ENCODE measurements at regions of chr13 and their contacts with region 1.

Region 1: DNA sequence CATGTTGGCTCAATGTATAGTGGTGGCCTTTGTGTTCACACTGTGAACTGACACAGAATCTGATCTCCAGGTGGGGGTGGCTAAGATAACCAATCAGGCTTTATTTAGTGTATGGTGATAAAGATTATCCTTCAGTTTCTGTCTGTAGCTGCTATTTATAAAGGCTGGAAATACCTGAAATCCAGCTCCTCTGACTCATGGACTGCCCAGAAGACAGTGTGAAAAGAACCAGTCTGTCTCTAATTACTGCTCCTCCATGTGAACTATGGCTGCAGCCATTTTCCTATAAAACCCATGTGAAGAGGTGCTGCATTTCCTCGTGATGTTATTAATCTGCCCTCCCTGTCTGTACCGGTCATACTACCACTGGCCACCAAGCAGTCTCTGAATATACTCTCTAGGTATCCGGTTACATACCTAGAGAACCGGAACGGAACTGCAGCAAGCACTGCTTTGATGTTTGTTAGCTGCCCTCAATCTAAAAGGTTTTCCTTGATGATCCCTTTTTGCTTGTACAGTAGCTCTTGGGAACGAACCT is 238.0 kb downstream of the LHFPL6 start:
- DNase-seq: no peak
- H3K4me3 ChIP-seq: no peak overlapping the region
- H3K27ac ChIP-seq: no peak overlapping the region
- H3K27me3 ChIP-seq: no peaks in the 10 kb centered on the region
- CTCF ChIP-seq: 0 out of 2 replicates have a peak, but pooled peaks have one; percentile 10

Region 2: GRCh38 chr13:39341251-39341650 is 23.8 kb before region 1 on chr13:
- CTCF ChIA-PET with region 1: interaction called, 11 read pairs
- POLR2A ChIA-PET with region 1: no interaction called
- DNase-seq: no peak
- H3K4me3 ChIP-seq: no peak overlapping the region
- H3K27ac ChIP-seq: no peak overlapping the region
- H3K27me3 ChIP-seq: no peaks in the 10 kb centered on the region
- CTCF ChIP-seq: no peak

Region 3: GRCh38 chr13:41327994-41328790 is 1963.2 kb after region 1 on chr13:
- CTCF ChIA-PET with region 1: no interaction called
- POLR2A ChIA-PET with region 1: no interaction called
- DNase-seq: no peak
- H3K4me3 ChIP-seq: no peak overlapping the region
- H3K27ac ChIP-seq: no peak overlapping the region
- H3K27me3 ChIP-seq: no peaks in the 10 kb centered on the region
- CTCF ChIP-seq: no peak